Posterior vena cava (tissue), 2 donors: ENCODE measurements at regions of chr12 and their contacts with region 1.

Region 1: DNA sequence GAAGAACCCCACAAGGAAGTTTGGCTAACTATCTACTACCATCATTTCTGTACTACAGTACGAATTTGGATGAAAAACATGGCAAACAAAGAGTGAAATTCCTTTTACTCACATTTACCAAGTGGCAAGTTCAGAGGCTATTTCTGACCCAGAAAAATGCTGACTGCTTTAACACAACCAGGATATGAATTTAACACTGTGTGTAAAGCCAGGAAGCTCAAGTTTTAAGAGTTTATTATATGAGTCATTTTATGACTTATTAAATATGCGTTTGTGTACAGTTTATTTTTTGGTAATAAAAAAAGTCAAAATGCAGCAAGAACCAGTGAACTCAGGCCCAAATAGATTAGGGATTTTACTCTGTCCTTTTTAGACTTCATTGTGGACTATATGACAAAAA is 58.4 kb upstream of the STAC3 start:
- DNase-seq: no peak

Region 2: GRCh38 chr12:55946553-55946952 is 1362.9 kb before region 1 on chr12:
- intact Hi-C with region 1: no loop called
- DNase-seq: no peak

Region 3: GRCh38 chr12:56117778-56118687 is 1191.4 kb before region 1 on chr12 and contains the start of gene ZC3H10:
- intact Hi-C with region 1: no loop called
- DNase-seq: peak; percentile 99
- total RNA-seq, gene ZC3H10: 7.9 to 8.0 TPM

Region 4: GRCh38 chr12:57280211-57281062 is 29.0 kb before region 1 on chr12:
- intact Hi-C with region 1: loop called in 1 of 2 experiments (anchors 1 kb)
- DNase-seq: no peak

Region 5: GRCh38 chr12:57452937-57453509 is 143.6 kb after region 1 on chr12:
- intact Hi-C with region 1: loop called (anchors 5 kb)
- DNase-seq: peak; percentile 93

Region 6: GRCh38 chr12:57459055-57459749 is 149.8 kb after region 1 on chr12:
- intact Hi-C with region 1: loop called (anchors 5 kb)
- DNase-seq: peak; percentile 98

Region 7: GRCh38 chr12:58566599-58566998 is 1257.2 kb after region 1 on chr12:
- intact Hi-C with region 1: no loop called
- DNase-seq: no peak